ENCODE measurements at regions of chr1 and their contacts with region 1.

Region 1: GRCh38 chr1:115714534-115715180 is 53.9 kb downstream of the CASQ2 start:
- DNase-seq: peak; percentile 93 to 100
- H3K4me3 ChIP-seq: peak overlapping the region; percentile 26; the same call in 1 of the 2 replicates
- H3K27ac ChIP-seq: peak overlapping the region; percentile 94
- H3K4me1 ChIP-seq: peaks cover 64% of the 10 kb centered on the region
- H3K27me3 ChIP-seq: no peaks in the 10 kb centered on the region
- CTCF ChIP-seq: no peak; the same call in 1 of the 2 replicates

Region 2: DNA sequence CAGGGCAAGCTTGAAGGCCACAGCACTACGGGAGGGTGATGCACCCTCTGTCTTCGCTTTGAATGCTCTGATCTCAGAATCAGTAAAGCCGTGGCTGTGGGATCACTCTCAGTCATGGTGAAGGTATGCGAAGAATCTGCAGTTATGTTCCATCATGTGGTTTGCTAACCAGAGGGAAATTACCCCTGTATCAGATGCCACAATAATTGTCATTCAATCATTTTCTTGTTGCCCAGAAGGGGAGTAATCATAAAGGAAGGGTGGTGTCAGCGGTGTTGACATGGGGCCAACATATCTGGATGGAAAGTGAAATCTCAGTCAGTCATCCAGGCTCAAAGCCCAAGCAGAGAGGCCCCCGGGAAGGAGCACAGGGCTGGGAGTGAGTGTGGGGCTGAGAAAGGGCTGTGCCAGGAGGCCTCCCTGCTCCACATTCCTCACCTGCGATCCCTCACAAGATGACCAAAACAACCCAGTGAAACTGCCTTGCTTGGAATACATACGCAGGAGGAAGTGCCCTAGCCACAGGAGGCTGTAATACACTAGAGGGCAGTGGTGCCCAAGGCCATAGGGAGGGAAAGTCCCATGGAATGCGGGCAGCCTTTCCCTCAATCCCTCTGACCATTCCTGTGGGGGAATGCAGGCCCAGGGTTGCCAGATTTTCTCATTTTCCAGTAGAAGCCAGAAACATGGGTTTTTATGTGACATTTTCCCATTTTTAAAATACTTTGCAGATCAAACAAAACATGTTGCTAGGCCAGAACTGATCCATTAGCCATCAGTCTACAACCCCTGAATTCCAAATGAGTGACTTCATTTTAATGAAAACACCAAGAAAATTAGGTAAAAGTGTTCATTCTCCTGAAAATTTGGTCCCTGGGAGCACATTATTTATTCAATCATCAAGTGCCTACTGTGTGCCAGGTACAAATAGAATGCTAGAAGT is 168.6 kb before region 1 on chr1:
- CTCF ChIA-PET with region 1: no interaction called
- POLR2A ChIA-PET with region 1: no interaction called
- intact Hi-C with region 1: loop called (anchors 2 kb)
- DNase-seq: peak; percentile 92 to 99
- H3K4me3 ChIP-seq: peak overlapping the region; percentile 9; the same call in 1 of the 2 replicates
- H3K27ac ChIP-seq: peak overlapping the region; percentile 91
- H3K4me1 ChIP-seq: peaks cover 35% of the 10 kb centered on the region
- H3K27me3 ChIP-seq: no peaks in the 10 kb centered on the region
- CTCF ChIP-seq: peak; percentile 82

Region 3: DNA sequence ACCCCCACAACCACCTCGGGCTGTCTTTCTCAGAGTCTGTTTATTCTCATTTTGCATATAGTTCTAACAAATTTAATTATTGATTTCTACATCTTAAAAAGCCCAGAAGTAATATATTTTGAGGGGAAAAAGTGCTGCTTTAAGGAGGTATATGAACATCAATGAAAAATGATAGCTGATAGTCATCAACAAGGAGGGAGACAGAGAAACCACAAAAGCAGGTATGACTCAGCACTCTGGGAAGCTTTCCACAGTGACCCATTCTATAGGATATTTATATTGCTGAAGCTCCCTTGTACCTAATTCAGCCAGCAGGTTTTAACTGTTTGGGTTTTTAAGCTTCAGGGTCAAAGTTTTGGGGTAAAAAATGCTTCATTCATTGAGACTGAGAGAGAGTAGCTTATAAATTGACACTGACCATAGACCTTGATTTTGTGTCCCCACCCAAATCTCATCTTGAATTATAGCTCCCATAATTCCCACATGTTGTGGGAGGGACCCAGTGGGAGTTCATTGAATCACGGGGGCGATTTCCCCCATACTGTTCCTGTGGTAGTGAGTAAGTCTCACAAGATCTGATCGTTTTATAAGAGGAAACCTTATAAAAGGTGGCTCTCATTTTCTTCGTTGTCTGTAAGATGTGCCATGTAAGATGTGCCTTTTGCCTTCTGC is 45.5 kb before region 1 on chr1:
- CTCF ChIA-PET with region 1: no interaction called
- POLR2A ChIA-PET with region 1: interaction called, 10 read pairs
- intact Hi-C with region 1: loop called (anchors 2 kb)
- DNase-seq: peak; percentile 44 to 83
- H3K4me3 ChIP-seq: peak overlapping the region; percentile 2; the same call in 1 of the 2 replicates
- H3K27ac ChIP-seq: peak overlapping the region; percentile 89
- H3K4me1 ChIP-seq: peaks cover 73% of the 10 kb centered on the region
- H3K27me3 ChIP-seq: no peaks in the 10 kb centered on the region
- CTCF ChIP-seq: no peak

Region 4: GRCh38 chr1:115748401-115749150 is 33.9 kb after region 1 on chr1:
- CTCF ChIA-PET with region 1: no interaction called
- POLR2A ChIA-PET with region 1: no interaction called
- intact Hi-C with region 1: loop called (anchors 1 kb)
- DNase-seq: peak; percentile 7 to 80
- H3K4me3 ChIP-seq: no peak overlapping the region
- H3K27ac ChIP-seq: peak overlapping the region; percentile 30; the same call in 1 of the 2 replicates
- H3K4me1 ChIP-seq: peaks cover 15% of the 10 kb centered on the region
- H3K27me3 ChIP-seq: no peaks in the 10 kb centered on the region
- CTCF ChIP-seq: no peak

Region 5: GRCh38 chr1:115771847-115772457 is 57.3 kb after region 1 on chr1:
- CTCF ChIA-PET with region 1: no interaction called
- POLR2A ChIA-PET with region 1: interaction called, 10 read pairs
- intact Hi-C with region 1: no loop called
- DNase-seq: peak; percentile 74 to 82
- H3K4me3 ChIP-seq: peak overlapping the region; percentile 8; the same call in 1 of the 2 replicates
- H3K27ac ChIP-seq: no peak overlapping the region
- H3K4me1 ChIP-seq: peaks cover 7% of the 10 kb centered on the region
- H3K27me3 ChIP-seq: no peaks in the 10 kb centered on the region
- CTCF ChIP-seq: peak; percentile 95